Left ventricle myocardium superior (tissue), 1 donor: ENCODE measurements at regions of chr4 and their contacts with region 1.

Region 1: DNA sequence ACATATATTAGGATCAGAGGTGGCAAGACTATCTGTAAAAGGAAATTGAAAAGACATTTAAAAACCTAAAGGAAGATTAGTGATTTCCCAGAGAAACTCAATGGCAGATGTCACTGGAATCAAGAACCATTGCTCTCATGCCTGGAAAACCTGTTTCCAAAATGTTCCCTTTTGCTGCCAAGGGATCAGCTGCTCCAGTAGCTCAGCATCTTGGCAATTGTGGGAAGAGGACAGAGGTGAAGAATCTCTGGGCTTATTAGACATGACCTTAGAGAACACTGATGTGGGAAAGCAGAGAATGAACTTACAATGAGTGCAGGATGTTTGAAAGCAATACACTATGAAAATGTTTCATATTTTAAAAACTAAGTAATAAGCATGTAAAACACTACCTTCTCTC is 98.3 kb downstream of the SHROOM3 start:
- DNase-seq: no peak
- ATAC-seq: peak; percentile 72

Region 2: DNA sequence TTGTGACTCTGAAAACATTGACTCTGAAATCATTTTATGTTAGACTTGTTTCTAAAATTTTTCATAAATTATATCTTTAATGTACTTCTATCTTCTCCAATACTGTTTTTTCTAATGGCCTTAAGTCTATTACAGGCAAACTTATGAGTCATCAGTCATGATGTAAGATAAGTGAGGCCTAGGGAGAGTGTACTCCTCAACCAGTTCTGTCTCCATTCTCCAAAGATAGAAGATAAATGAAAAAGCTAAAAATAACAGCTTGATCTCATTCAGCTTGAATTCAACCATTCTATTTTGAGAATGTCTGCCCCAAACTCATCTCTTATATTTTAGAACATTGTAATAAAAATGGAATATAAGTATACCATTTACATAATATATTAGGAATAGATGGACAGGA is 192.3 kb before region 1 on chr4:
- intact Hi-C with region 1: no loop called
- DNase-seq: no peak
- ATAC-seq: peak; percentile 87

Region 3: DNA sequence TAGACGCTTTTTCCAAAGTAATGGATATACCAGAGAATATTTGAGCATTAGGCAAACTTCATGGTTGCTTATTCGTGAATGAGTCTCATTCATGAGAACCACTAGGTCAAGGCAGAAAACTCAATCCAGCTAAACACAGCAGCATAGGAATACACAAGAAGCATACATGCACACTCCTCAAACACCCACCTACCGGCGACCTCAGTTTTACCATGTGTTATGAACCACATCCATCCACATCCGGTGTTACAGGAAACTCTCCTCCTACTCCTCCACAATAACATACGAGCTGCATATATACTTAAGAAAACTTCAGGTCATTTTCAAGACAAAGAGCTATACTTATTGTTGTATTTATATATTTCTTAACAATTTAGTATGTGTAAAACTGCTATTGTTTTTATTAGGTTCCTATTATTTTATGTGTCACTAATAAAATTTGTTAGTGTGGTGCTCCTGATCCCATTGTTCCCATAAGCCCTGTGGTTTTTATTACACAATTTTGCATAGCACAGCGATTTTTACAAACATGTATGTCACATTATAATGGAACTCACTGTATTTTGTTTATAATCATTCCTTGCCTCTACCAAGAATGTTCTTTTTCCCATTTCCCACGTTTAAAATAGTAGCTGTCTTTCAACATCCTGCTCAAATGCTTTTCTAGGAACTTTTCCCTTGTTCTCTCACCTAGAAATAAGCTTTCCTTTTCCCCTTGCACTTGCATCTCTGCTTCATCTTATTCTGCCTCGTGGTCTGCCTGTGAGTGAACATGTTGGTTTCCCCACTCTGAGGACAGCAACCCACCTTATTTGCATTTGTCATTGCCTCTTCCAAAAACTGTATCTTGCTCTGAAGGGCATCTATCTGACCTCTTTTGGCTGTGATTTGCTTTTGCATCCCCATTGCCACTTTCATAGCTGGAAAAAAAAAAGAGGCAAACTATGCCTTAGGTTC is 178.5 kb before region 1 on chr4:
- intact Hi-C with region 1: no loop called
- DNase-seq: no peak
- ATAC-seq: no peak

Region 4: GRCh38 chr4:76388160-76388908 is 145.0 kb before region 1 on chr4:
- intact Hi-C with region 1: no loop called
- DNase-seq: no peak
- ATAC-seq: no peak

Region 5: DNA sequence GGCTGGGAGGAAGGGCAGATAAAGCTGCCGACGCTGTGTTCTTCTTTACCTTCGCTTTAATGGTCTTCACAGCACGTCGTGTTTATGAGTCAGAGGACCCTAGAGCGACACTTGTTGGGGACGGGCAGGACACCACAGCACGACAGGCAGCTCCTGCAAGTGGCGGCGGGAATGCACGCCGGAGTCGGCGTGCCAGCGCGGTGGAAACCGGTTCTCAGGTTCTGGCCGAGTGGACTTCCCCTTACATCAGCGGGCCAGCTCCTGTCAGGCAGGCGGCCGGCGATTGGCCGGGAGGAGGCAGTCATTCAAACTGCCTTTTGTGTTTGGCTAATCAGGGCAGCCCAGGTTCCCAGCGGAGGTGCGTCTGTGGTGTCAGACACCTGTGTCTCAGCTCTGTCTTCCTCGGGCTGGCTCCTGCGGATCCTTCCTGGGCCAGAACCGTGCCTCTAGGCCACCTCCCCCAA is 52.6 kb after region 1 on chr4:
- intact Hi-C with region 1: loop called (anchors 5 kb)
- DNase-seq: peak; percentile 87
- ATAC-seq: peak; percentile 91

Region 6: GRCh38 chr4:76607266-76607799 is 74.0 kb after region 1 on chr4:
- intact Hi-C with region 1: no loop called
- DNase-seq: no peak
- ATAC-seq: peak; percentile 15